Heart left ventricle (tissue), 16 donors: ENCODE measurements at regions of chr2 and their contacts with region 1.

Region 1: DNA sequence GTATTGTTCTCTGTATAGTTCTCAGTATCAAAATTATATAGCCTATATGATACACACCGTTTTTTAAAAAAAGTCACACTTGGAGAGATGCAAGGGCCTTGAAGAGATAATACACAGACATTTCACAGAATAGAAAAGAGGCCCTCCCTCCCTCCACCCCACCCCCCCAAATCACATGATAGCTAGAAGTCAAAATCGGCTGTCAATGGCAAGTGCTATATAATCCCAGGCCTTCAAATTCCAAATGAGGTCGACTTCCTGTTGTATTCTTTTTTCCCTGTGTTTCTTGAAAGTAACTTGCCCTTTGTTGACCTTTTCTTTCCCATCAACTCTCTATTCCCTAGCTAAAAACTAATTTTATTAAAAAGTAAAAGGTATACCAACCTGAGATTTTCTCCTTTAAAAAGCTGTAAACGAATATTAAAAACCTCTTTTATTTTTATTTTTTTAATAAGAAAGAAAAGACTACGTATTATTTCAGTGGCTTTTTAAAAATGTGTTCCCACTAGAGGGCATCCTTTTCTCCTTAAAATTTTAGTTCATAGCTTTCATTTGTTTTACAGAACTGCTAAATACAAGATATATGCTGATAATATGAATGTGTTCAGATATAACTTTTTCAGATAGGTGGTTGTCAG is 46.6 kb downstream of the KCMF1 start:
- DNase-seq: no peak
- ATAC-seq: no peak
- H3K4me3 ChIP-seq: no peak overlapping the region
- H3K27ac ChIP-seq: peak overlapping the region in 1 of 12 donors; percentile 1
- H3K4me1 ChIP-seq: peaks cover 7 to 64% (median 43%) of the 10 kb centered on the region in 12 donors
- H3K27me3 ChIP-seq: no peaks in the 10 kb centered on the region
- CTCF ChIP-seq: peak in 10 of 12 donors; percentile 12 to 54 (median 41)
- POLR2A ChIP-seq: no peak

Region 2: DNA sequence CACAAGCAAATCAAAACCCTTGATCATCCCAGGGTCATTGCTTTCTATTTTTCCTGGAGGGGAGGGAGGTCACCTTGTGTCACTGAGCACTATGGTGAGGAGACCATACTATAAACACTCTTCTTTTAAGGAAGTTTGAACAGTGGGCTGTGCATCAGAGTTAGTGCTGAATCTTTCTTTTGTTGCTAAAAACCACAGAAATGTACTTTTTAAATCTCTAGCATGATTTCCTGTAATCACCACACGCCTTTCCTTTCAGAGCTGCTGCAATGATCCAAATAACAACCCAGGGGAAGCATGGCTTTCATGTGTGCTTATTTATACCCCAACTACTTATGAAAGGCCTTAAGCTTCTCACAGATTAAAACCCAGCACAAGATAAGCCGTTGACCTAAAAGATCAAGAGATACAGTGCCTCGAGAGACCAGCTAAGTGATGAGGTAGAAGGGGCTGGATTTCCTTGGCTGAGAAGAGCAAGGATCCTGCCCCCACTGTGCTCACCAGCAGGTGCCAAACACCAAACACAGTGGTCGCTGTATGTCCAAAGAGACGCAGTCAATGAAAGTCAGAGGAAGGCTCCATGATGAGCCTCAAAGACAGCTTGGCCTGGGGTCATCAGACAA is 171.4 kb before region 1 on chr2:
- intact Hi-C with region 1: no loop called
- DNase-seq: no peak
- ATAC-seq: peak in 3 of 4 donors; percentile 29 to 63 (median 48)
- H3K4me3 ChIP-seq: no peak overlapping the region
- H3K27ac ChIP-seq: peak overlapping the region in 5 of 12 donors; percentile 25 to 95 (median 34)
- H3K4me1 ChIP-seq: peaks cover 0 to 47% (median 0%) of the 10 kb centered on the region in 12 donors
- H3K27me3 ChIP-seq: no peaks in the 10 kb centered on the region
- CTCF ChIP-seq: no peak
- POLR2A ChIP-seq: no peak

Region 3: GRCh38 chr2:85053802-85054201 is 36.3 kb after region 1 on chr2:
- intact Hi-C with region 1: loop called in 1 of 10 experiments (anchors 2 kb)
- DNase-seq: no peak
- ATAC-seq: no peak
- H3K4me3 ChIP-seq: no peak overlapping the region
- H3K27ac ChIP-seq: no peak overlapping the region
- H3K4me1 ChIP-seq: peaks cover 0 to 33% (median 0%) of the 10 kb centered on the region in 12 donors
- H3K27me3 ChIP-seq: no peaks in the 10 kb centered on the region
- CTCF ChIP-seq: no peak
- POLR2A ChIP-seq: no peak